CD4-positive, alpha-beta T cell (primary cell): ENCODE measurements at regions of chr7 and their contacts with region 1.

Region 1: DNA sequence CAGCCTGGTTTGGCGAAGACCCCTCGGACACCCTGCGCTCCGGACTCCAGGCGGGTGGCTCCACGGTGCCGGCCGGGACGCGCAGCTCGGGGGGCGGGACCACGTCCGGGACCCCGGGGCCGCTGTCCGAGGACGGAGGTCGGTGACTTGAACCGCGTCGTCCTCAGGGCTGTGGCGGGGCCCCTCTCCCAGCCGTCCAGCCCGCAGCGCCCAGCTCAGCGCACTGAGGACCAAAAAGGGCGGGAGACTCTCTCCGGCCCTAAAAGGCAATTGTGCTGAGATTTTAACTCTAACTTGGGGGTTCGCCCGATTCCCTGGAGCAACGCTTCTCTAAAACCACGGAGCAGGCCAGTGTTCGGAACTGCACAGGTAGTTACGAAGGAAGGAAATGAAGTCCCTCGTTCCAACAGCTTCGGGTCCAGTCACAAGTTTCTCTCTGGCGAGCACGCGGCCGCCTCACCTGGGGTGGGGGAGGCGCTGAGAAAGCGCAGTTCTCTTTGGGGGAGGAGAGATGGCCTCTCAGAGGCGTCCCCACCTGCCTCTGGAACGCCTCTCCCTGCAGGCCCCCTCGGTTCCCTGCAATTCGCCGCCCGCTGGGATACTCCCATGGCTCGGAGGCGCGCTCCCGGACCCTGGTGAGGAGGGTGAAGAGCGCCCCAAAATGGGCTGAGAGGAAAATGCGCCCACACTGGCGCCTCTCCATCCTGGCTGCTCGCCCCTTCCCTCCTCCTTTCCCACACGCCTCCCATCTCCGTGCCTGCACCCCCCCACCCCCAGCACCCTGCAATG is 352.7 kb downstream of the DNAJB6 start:
- DNase-seq: no peak
- ATAC-seq: no peak
- H3K4me3 ChIP-seq: no peak overlapping the region
- H3K4me3 Mint-ChIP-seq: no peak overlapping the region
- H3K27ac ChIP-seq: no peak overlapping the region
- H3K27ac Mint-ChIP-seq: no peak overlapping the region
- H3K4me1 ChIP-seq: peaks cover 56% of the 10 kb centered on the region
- H3K4me1 Mint-ChIP-seq: peaks cover 39% of the 10 kb centered on the region
- H3K27me3 ChIP-seq: peaks cover 61 to 78% of the 10 kb centered on the region in 2 experiments
- H3K27me3 Mint-ChIP-seq: peaks cover 57% of the 10 kb centered on the region
- CTCF ChIP-seq: no peak

Region 2: GRCh38 chr7:157625973-157626742 is 63.3 kb before region 1 on chr7:
- CTCF ChIA-PET with region 1: no interaction called
- POLR2A ChIA-PET with region 1: interaction called, 5 read pairs
- intact Hi-C with region 1: loop called in 1 of 2 experiments (anchors 5 kb)
- DNase-seq: peak in 8 of 14 experiments; percentile 14 to 74 (median 42)
- ATAC-seq: peak; percentile 72
- H3K4me3 ChIP-seq: peak overlapping the region; percentile 19
- H3K4me3 Mint-ChIP-seq: peak overlapping the region; percentile 72
- H3K27ac ChIP-seq: no peak overlapping the region
- H3K27ac Mint-ChIP-seq: peak overlapping the region; percentile 68
- H3K4me1 ChIP-seq: peaks cover 57% of the 10 kb centered on the region
- H3K4me1 Mint-ChIP-seq: peaks cover 80% of the 10 kb centered on the region
- H3K27me3 ChIP-seq: peaks cover 0 to 3% of the 10 kb centered on the region in 2 experiments
- H3K27me3 Mint-ChIP-seq: no peaks in the 10 kb centered on the region
- CTCF ChIP-seq: no peak